A673 (cell line): ENCODE measurements at regions of chr7 and their contacts with region 1.

Region 1: DNA sequence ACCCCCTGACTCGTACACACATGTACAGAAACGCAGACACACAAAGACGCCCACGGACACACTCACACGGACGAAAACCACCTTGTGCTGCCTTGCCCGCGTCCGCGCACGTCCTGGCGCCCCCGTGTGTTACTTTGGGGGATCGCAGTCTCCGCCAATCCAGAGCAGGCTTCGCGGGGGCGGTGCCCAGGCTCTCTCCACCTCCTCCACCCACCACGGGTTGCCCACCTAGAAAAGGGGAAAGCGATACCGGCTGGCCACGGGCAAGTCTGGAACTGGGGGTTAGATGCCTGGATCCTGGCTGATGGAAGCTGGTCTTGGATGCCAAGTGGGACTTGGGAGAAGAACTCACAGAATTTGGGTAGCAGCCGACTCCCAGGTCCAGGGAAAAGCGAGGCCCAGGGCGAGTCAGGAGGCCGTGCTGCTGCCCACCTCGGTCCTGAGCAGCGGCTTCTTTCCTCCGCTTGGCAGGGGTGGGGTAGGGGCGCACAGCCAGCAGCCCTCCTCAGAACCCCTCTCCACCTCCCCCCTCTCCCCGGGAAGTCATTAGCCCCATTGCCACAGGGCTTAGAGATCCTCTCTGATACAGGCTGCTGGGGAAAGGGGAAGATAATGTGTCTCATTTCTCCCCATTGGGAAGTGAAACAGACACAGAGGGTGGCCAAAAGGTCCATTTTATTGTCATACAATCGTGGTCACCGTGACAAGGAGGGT is 4.6 kb upstream of the VGF start:
- DNase-seq: peak; percentile 79
- H3K4me3 ChIP-seq: no peak overlapping the region
- H3K27ac ChIP-seq: no peak overlapping the region
- H3K4me1 ChIP-seq: peaks cover 58% of the 10 kb centered on the region
- H3K27me3 ChIP-seq: peaks cover 62% of the 10 kb centered on the region
- CTCF ChIP-seq: peak; percentile 99

Region 2: DNA sequence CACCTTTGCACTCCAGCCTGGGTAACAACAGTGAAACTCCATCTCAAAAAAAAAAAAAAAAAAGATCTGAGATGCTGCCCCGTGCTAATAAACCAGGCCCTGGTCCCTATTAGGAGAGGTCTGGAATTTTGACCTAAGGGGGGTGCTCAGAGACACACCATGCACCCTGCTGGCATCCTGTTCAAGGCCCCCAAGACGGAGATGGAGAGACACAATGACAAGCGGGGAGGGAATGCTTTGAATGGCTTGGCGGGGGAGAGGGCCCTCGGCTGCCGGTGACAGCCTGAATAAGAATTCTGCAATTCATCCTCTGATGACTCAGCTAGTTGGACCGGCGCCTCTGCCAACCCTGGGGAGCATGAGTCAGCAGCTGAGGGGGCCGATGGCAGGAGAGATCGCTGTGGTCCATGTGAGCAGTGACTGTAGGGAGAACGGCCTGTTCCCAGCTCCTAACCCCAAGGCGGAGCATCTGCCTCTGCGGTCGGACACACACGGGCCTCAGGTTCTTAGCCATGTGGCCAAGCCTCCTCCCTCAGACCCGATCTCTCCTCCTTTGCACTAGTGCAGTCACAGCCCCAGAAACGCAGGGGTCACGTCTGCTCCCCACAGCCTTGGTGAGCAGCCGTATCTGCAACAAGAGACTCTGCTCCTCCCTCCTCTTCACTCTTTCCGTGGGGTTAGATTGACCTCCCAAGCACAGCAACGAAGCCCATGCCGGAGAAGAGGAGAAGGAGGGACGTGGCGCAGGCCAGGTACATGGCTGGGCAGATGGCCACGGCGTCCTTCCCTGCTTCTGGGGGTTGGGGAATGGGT is 69.8 kb before region 1 on chr7:
- CTCF ChIA-PET with region 1: no interaction called
- POLR2A ChIA-PET with region 1: no interaction called
- intact Hi-C with region 1: loop called (anchors 10 kb)
- DNase-seq: peak; percentile 96
- H3K4me3 ChIP-seq: no peak overlapping the region
- H3K27ac ChIP-seq: peak overlapping the region; percentile 65
- H3K4me1 ChIP-seq: peaks cover 20% of the 10 kb centered on the region
- H3K27me3 ChIP-seq: no peaks in the 10 kb centered on the region
- CTCF ChIP-seq: no peak

Region 3: DNA sequence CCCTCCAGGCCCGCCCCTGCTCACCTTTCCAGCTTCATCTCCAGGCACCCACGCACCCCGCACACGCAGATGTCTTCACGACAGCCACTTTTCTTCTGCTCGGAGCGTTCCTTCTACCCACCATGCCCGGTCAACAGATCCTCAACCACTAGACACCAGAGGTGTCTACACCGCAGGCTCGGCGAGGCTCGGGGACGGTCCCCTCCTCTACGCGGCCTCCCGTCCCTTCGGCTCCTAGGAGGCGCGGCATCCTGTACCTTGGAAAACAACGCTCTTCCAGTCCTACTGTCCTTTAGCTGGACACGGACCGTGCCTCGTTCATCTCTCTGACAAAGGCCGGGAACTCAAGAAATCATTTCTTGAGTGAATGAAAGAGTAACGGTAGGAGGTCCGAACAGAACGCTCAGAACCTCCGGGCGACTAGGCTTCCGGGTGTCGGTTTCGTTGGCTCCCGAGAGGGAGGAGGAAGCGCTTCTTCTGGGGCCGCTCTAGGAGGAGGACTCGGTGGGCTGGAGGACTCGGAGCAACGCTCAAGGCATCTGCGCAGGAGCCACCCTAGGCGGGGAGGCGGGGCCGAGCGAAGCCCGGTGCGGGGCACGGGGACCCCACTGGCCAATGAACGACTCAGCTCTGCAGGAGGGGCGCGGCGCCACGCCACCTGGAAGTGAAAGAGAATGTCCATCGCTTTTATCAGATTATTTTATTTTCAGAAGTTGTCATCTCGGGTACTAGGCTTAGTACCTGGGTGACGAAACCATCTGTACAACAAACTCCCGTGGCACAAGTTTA is 82.1 kb after region 1 on chr7:
- CTCF ChIA-PET with region 1: no interaction called
- POLR2A ChIA-PET with region 1: no interaction called
- intact Hi-C with region 1: no loop called
- DNase-seq: peak; percentile 99
- H3K4me3 ChIP-seq: peak overlapping the region; percentile 70
- H3K27ac ChIP-seq: peak overlapping the region; percentile 56
- H3K4me1 ChIP-seq: no peaks in the 10 kb centered on the region
- H3K27me3 ChIP-seq: no peaks in the 10 kb centered on the region
- CTCF ChIP-seq: no peak